ENCODE measurements at regions of chr15 and their contacts with region 1.

Region 1: GRCh38 chr15:48352474-48353072 is 21.3 kb downstream of the DUT start:
- ATAC-seq: peak; percentile 64 to 95 (median 76)
- H3K4me3 ChIP-seq: no peak overlapping the region
- H3K27ac ChIP-seq: no peak overlapping the region
- H3K4me1 ChIP-seq: no peaks in the 10 kb centered on the region

Region 2: DNA sequence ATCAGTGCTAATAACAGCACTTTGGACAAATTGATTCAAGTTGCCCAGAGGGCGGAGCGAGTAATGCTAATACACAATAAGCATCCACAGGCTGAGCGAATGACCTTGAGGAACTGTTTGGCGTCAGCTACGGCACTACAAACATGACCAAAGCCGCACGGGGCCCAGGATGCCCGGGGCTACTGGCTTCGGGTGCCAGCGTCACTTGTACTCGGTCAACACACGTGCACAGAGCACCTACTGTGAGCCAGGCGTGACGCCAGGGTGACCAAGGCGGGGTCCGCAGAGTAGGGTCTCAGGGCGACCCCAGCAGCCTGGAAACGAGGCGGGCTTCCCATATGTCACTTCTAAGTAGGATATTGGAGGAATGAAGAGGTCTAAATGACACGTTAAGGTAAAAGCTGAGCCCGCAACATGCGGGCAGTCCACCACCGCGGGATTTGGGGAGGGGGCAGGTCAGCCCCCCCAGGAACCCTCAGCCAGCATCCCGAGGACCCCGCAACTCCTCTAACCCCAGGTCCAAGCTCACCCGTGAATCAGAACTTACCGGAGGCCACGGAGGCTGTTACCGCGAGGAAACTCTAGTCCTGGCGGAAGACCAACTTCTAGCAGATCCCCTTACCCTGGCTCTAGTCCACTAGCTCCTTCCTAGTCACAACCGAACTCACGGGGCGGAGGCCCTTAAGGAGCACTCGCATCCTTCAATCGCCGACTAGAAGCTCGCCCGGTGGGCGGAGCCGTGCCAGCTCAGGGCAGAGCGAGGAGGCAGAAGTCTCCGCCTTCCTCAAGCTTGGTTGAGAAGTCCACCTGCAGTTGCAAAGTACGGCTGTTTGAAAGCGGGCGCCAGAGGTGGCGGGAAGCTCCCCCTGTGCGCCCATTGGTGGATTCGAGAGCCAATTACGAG is 458.1 kb after region 1 on chr15 and contains the start of gene CEP152:
- in situ Hi-C with region 1: loop called in 2 of 9 experiments (anchors 25 kb)
- ATAC-seq: peak; percentile 96 to 98 (median 98)
- H3K4me3 ChIP-seq: peak within 1 kb of the TSS; percentile 38 to 72 (median 54)
- H3K27ac ChIP-seq: no peak within 1 kb of the TSS
- H3K4me1 ChIP-seq: peaks cover 0 to 3% of the 10 kb centered on the region in 2 donors
- total RNA-seq, gene CEP152: 1.4 to 30.2 (median 3.5) TPM

Region 3: GRCh38 chr15:48842501-48842900 is 489.9 kb after region 1 on chr15:
- in situ Hi-C with region 1: loop called in 1 of 9 experiments (anchors 25 kb)
- ATAC-seq: no peak
- H3K4me3 ChIP-seq: no peak overlapping the region
- H3K27ac ChIP-seq: no peak overlapping the region
- H3K4me1 ChIP-seq: no peaks in the 10 kb centered on the region

Measured in motor neuron (in vitro differentiated cells).